WTC11 (cell line): ENCODE measurements at regions of chr5 and their contacts with region 1.

Region 1: GRCh38 chr5:103224118-103224893 is 34.3 kb upstream of the MACIR start:
- DNase-seq: peak; percentile 65
- ATAC-seq: peak; percentile 93
- H3K4me3 Mint-ChIP-seq: peak overlapping the region; percentile 55
- H3K27ac Mint-ChIP-seq: no peak overlapping the region
- H3K4me1 Mint-ChIP-seq: peaks cover 13% of the 10 kb centered on the region
- H3K27me3 Mint-ChIP-seq: no peaks in the 10 kb centered on the region
- CTCF ChIP-seq: peak; percentile 67

Region 2: GRCh38 chr5:102681407-102681983 is 542.8 kb before region 1 on chr5:
- CTCF ChIA-PET with region 1: interaction called, 13 read pairs
- POLR2A ChIA-PET with region 1: no interaction called
- DNase-seq: peak; percentile 74
- ATAC-seq: peak; percentile 98
- H3K4me3 Mint-ChIP-seq: no peak overlapping the region
- H3K27ac Mint-ChIP-seq: no peak overlapping the region
- H3K4me1 Mint-ChIP-seq: no peaks in the 10 kb centered on the region
- H3K27me3 Mint-ChIP-seq: no peaks in the 10 kb centered on the region
- CTCF ChIP-seq: peak; percentile 52

Region 3: GRCh38 chr5:102998224-102998623 is 226.1 kb before region 1 on chr5:
- CTCF ChIA-PET with region 1: no interaction called
- POLR2A ChIA-PET with region 1: no interaction called
- DNase-seq: no peak
- ATAC-seq: no peak
- H3K4me3 Mint-ChIP-seq: no peak overlapping the region
- H3K27ac Mint-ChIP-seq: no peak overlapping the region
- H3K4me1 Mint-ChIP-seq: no peaks in the 10 kb centered on the region
- H3K27me3 Mint-ChIP-seq: no peaks in the 10 kb centered on the region
- CTCF ChIP-seq: no peak

Region 4: DNA sequence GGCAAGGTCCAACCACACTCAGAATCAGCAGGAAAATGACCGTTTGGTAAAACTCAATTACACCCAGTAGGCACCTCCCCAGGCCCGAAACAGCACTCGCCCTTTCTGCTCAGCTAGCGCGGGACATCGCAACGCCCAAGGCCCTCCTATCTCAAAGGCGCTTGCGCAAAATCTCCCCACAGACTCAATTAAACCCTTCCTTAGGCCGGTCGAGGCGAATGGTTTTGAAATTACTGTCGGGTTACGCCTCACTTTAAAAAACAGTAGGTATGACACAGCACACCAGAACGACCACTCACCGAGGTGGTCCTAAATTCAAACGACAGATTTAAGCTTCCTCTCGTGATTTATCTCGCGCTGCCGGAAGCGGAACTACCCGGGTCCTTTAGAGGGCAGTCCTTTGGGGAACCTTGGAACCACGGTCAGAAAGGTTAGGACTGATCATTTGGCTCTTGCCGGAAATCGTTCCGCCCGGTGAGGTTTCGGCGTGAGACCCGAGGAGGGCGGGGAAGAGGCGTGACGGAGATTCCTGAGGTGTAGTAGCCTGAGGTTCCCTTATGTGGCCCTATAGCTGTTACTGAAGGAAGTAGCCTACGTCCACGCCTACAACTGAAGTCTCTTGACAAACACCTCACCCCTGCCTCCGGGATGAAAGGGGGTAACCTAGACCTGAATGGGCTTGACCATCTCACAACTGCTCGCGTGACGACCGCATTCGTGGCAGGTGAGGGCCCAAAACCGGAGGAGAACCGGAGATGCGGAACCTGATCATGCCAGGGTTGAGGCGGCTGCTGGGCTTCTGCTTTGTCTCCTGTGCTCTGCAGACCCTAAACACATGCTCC is 104.3 kb before region 1 on chr5 and contains the starts of genes GIN1 and PPIP5K2:
- CTCF ChIA-PET with region 1: interaction called, 13 read pairs
- POLR2A ChIA-PET with region 1: interaction called, 3 read pairs
- DNase-seq: peak; percentile 97
- ATAC-seq: peak; percentile 95
- H3K4me3 Mint-ChIP-seq: peak within 1 kb of the TSS; percentile 98
- H3K27ac Mint-ChIP-seq: peak within 1 kb of the TSS; percentile 100
- H3K4me1 Mint-ChIP-seq: peaks cover 26% of the 10 kb centered on the region
- H3K27me3 Mint-ChIP-seq: no peaks in the 10 kb centered on the region
- CTCF ChIP-seq: no peak
- total RNA-seq, gene GIN1: 5.7 to 7.0 TPM (median 6.7 TPM) in 3 replicates
- total RNA-seq, gene PPIP5K2: 47.3 to 67.6 TPM (median 47.8 TPM) in 3 replicates

Region 5: DNA sequence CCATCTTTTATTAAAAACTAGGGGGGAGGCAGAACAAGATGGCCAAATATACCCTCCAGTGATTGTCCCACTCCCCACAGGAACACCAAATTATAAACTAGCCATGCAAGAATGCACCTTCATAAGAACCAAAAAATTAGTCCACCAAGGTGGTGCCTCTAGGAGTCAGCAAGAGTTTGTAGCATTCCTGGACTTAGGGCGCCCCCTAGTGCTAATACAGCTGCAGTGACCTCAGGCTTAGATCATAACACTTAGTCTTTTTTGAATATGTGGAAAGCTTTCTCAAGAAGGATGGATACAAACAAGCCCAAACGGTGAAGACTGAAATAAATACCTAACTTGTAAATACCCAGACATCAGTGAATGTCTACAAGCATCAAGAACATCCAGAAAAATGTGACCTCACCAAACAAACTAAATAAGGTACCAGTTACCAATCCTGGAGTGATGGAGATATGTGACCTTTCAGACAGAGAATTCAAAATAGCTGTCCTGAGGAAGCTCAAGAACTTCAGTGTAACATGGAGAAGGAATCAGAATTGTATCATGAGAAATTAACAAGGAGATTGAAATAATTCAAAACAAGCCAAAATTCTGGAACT is 84.9 kb before region 1 on chr5:
- CTCF ChIA-PET with region 1: interaction called, 11 read pairs
- POLR2A ChIA-PET with region 1: no interaction called
- DNase-seq: peak; percentile 80
- ATAC-seq: peak; percentile 96
- H3K4me3 Mint-ChIP-seq: no peak overlapping the region
- H3K27ac Mint-ChIP-seq: no peak overlapping the region
- H3K4me1 Mint-ChIP-seq: no peaks in the 10 kb centered on the region
- H3K27me3 Mint-ChIP-seq: no peaks in the 10 kb centered on the region
- CTCF ChIP-seq: peak; percentile 91

Region 6: DNA sequence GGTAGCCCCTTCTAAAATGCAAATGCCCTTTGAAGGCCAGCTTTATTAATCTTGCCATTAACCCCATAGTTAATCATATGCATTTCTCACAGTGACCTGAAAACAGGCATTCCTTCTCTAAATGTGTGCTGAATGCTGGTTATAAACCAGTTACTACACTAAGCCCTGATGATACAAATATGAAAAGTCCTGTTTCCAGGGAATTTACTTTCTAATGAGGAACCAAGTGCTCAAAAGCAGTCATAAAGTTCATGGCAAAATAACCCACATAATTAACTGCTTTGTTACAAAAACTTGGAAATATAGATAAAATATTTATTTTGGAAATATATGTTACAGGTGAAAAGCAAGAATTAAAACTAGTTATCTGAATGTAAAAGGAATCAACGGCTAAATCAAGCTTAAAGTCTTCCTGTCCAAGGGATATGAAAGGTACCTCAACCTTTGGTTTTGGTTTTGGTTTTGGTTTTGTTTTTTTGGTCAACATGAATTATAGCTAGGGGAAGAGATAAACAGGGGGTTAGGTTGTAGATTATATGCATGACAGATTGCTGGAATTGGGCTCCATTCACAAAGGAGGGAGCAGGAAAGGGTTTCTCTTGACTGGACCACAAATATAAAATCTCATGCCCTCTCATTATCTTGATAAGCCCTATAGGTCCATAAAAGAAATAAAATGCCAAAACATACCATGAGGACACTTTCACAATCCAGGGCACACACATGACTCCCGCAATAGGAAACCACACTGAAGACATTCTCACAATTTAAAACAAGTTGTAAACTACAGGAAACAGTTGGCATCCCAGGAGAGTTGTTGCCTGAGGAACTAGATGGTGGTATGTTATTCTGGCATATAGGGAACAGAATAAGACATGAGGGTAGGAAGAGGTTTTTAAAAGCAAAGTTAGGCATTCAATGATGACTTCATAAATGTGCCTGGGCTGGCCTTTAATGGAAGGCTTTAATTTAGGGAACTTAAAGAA is 12.4 kb before region 1 on chr5:
- CTCF ChIA-PET with region 1: interaction called, 55 read pairs
- POLR2A ChIA-PET with region 1: no interaction called
- DNase-seq: no peak
- ATAC-seq: no peak
- H3K4me3 Mint-ChIP-seq: no peak overlapping the region
- H3K27ac Mint-ChIP-seq: no peak overlapping the region; the same call in 1 of the 2 replicates
- H3K4me1 Mint-ChIP-seq: peaks cover 14% of the 10 kb centered on the region; the same call in 1 of the 2 replicates
- H3K27me3 Mint-ChIP-seq: no peaks in the 10 kb centered on the region
- CTCF ChIP-seq: no peak

Region 7: GRCh38 chr5:103243665-103244064 is 19.4 kb after region 1 on chr5:
- CTCF ChIA-PET with region 1: no interaction called
- POLR2A ChIA-PET with region 1: no interaction called
- DNase-seq: no peak
- ATAC-seq: no peak
- H3K4me3 Mint-ChIP-seq: no peak overlapping the region
- H3K27ac Mint-ChIP-seq: no peak overlapping the region
- H3K4me1 Mint-ChIP-seq: no peaks in the 10 kb centered on the region; the same call in 1 of the 2 replicates
- H3K27me3 Mint-ChIP-seq: peaks cover 4% of the 10 kb centered on the region; the same call in 1 of the 2 replicates
- CTCF ChIP-seq: no peak

Region 8: GRCh38 chr5:103258368-103258956 is 34.2 kb after region 1 on chr5 and contains the start of gene MACIR:
- CTCF ChIA-PET with region 1: interaction called, 15 read pairs
- POLR2A ChIA-PET with region 1: interaction called, 6 read pairs
- DNase-seq: peak; percentile 97
- ATAC-seq: peak; percentile 94
- H3K4me3 Mint-ChIP-seq: peak within 1 kb of the TSS; percentile 95
- H3K27ac Mint-ChIP-seq: peak within 1 kb of the TSS; percentile 91
- H3K4me1 Mint-ChIP-seq: peaks cover 39% of the 10 kb centered on the region
- H3K27me3 Mint-ChIP-seq: no peaks in the 10 kb centered on the region
- CTCF ChIP-seq: no peak
- total RNA-seq, gene MACIR: 12.4 to 13.8 TPM (median 13.1 TPM) in 3 replicates

Region 9: GRCh38 chr5:103475629-103476240 is 251.4 kb after region 1 on chr5:
- CTCF ChIA-PET with region 1: interaction called, 18 read pairs
- POLR2A ChIA-PET with region 1: no interaction called
- DNase-seq: no peak
- ATAC-seq: peak; percentile 81
- H3K4me3 Mint-ChIP-seq: no peak overlapping the region
- H3K27ac Mint-ChIP-seq: no peak overlapping the region; the same call in 1 of the 2 replicates
- H3K4me1 Mint-ChIP-seq: peaks cover 24% of the 10 kb centered on the region
- H3K27me3 Mint-ChIP-seq: no peaks in the 10 kb centered on the region
- CTCF ChIP-seq: 0 out of 2 replicates have a peak, but pooled peaks have one; percentile 14